ENCODE measurements at regions of chr10 and their contacts with region 1.

Region 1: GRCh38 chr10:27742195-27743011 is 3.2 kb downstream of the MKX start:
- DNase-seq: peak; percentile 92
- ATAC-seq: peak; percentile 91
- H3K4me3 Mint-ChIP-seq: peak overlapping the region; percentile 65
- H3K27ac Mint-ChIP-seq: peak overlapping the region; percentile 47
- H3K4me1 Mint-ChIP-seq: peaks cover 33% of the 10 kb centered on the region
- H3K27me3 Mint-ChIP-seq: peaks cover 56% of the 10 kb centered on the region

Region 2: GRCh38 chr10:27504007-27504807 is 238.2 kb before region 1 on chr10 and contains the start of gene RAB18:
- CTCF ChIA-PET with region 1: interaction called, 4 read pairs
- POLR2A ChIA-PET with region 1: interaction called, 3 read pairs
- intact Hi-C with region 1: loop called (anchors 1 to 5 kb)
- DNase-seq: peak; percentile 99
- ATAC-seq: peak; percentile 98
- H3K4me3 Mint-ChIP-seq: peak within 1 kb of the TSS; percentile 93
- H3K27ac Mint-ChIP-seq: peak within 1 kb of the TSS; percentile 93
- H3K4me1 Mint-ChIP-seq: peaks cover 46% of the 10 kb centered on the region
- H3K27me3 Mint-ChIP-seq: no peaks in the 10 kb centered on the region
- total RNA-seq, gene RAB18: 44.6 to 49.3 TPM

Region 3: GRCh38 chr10:27779462-27780015 is 37.1 kb after region 1 on chr10:
- CTCF ChIA-PET with region 1: no interaction called
- POLR2A ChIA-PET with region 1: no interaction called
- intact Hi-C with region 1: no loop called
- DNase-seq: no peak
- ATAC-seq: no peak
- H3K4me3 Mint-ChIP-seq: no peak overlapping the region
- H3K27ac Mint-ChIP-seq: no peak overlapping the region
- H3K4me1 Mint-ChIP-seq: no peaks in the 10 kb centered on the region
- H3K27me3 Mint-ChIP-seq: peaks cover 28% of the 10 kb centered on the region

Region 4: GRCh38 chr10:28179006-28179742 is 436.8 kb after region 1 on chr10:
- CTCF ChIA-PET with region 1: interaction called, 11 read pairs
- POLR2A ChIA-PET with region 1: interaction called, 3 read pairs
- intact Hi-C with region 1: loop called (anchors 1 kb)
- DNase-seq: peak; percentile 51
- ATAC-seq: peak; percentile 28
- H3K4me3 Mint-ChIP-seq: peak overlapping the region; percentile 43
- H3K27ac Mint-ChIP-seq: peak overlapping the region; percentile 97
- H3K4me1 Mint-ChIP-seq: peaks cover 36% of the 10 kb centered on the region
- H3K27me3 Mint-ChIP-seq: no peaks in the 10 kb centered on the region

Region 5: DNA sequence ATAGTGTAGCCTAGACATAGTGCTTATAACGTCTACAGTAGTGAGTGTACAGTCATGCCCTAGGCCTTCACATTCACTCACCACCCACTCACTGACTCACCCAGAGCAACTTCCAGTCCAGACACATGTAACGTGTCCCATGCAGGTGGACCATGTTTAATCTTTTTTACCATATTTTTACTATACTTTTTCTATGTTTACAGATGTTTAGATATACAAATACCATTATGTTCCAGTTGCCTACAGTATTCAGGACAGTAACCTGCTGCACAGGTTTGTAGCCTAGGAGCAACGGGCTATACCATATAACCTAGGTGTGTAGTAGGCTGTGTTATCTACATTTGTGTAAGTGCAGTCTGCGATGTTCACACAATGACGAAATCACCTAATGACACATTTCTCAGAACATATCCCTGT is 549.5 kb after region 1 on chr10:
- CTCF ChIA-PET with region 1: no interaction called
- POLR2A ChIA-PET with region 1: no interaction called
- intact Hi-C with region 1: loop called in 1 of 2 experiments (anchors 2 kb)
- DNase-seq: peak; percentile 80
- ATAC-seq: peak; percentile 97
- H3K4me3 Mint-ChIP-seq: no peak overlapping the region
- H3K27ac Mint-ChIP-seq: peak overlapping the region; percentile 72
- H3K4me1 Mint-ChIP-seq: peaks cover 56% of the 10 kb centered on the region
- H3K27me3 Mint-ChIP-seq: no peaks in the 10 kb centered on the region

Region 6: GRCh38 chr10:28532383-28533175 is 790.2 kb after region 1 on chr10 and contains the start of gene WAC:
- CTCF ChIA-PET with region 1: no interaction called
- POLR2A ChIA-PET with region 1: no interaction called
- intact Hi-C with region 1: loop called in 1 of 2 experiments (anchors 2 kb)
- DNase-seq: peak; percentile 99
- ATAC-seq: peak; percentile 88
- H3K4me3 Mint-ChIP-seq: peak within 1 kb of the TSS; percentile 95
- H3K27ac Mint-ChIP-seq: peak within 1 kb of the TSS; percentile 100
- H3K4me1 Mint-ChIP-seq: peaks cover 56% of the 10 kb centered on the region
- H3K27me3 Mint-ChIP-seq: no peaks in the 10 kb centered on the region
- total RNA-seq, gene WAC: 103 to 136 TPM

Measured in activated CD4-positive, alpha-beta T cell treated with anti-CD3 and anti-CD28 coated beads for 36 hours (primary cell).